ENCODE measurements at regions of chr2 and their contacts with region 1.

Region 1: DNA sequence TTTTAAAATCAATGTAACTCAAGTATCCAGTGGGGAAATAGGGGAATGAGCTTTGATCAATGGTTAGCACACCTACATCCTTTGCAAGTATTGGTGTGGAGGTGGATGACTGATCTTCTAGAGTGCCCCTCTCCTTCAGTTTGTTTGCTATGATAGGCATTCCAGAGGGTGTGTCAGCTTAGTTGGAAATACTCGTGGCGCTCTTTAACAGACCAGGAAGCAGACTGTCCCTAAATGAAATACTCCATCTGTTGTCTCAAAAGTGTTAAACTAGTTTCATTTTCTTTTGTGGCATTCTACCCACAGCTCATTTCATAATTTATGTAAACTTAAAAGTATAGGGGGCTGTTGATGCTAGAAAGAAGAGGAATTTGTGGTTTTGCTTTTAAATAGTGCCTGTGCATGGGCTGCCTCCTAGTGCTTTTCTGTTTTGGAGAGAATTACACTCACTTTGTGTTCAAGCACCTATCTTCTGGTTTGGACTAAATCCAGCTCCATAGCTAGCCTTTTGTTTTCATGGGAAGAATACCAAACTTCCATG is 66.2 kb downstream of the STAT1 start:
- DNase-seq: no peak

Region 2: GRCh38 chr2:190853531-190854383 is 94.0 kb before region 1 on chr2:
- intact Hi-C with region 1: loop called (anchors 10 kb)
- DNase-seq: no peak

Measured in cardiac septum (tissue), 1 donor.